IMR-90 (cell line): ENCODE measurements at regions of chr3 and their contacts with region 1.

Region 1: DNA sequence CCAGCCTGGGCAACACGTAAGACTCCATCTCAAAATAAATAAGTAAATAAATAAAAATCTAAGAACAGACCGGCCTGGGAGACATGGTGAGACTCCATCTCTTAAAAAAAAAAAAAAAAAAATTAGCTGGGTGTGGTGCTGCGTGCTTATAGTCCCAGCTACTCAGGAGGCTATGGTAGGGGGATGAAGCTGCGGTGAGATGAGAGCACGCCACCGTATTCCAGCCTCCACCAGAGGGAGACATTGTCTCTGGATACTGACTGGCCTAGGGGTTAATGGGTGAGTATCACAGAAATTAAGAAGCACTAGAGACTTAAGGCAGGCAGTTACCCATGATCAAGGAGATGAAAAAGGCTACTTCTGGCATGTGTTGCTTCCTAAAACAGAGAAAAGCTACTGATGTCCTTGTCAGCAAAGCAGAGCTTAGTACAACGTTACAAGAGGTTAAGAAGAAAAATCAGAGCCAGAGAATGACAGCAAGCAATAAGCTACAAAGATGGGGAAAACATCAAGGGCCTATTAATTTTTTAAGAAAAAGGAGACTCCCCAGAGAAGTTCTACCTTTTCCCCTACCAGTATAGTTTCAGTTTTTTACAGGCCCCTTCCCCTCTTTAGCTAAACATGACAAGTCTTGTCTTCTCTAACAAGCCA is 8.6 kb downstream of the TFRC start:
- DNase-seq: peak; percentile 54
- ATAC-seq: peak; percentile 91
- H3K4me3 ChIP-seq: no peak overlapping the region
- H3K27ac ChIP-seq: no peak overlapping the region
- H3K4me1 ChIP-seq: peaks cover 4% of the 10 kb centered on the region; the same call in 1 of the 2 replicates
- H3K27me3 ChIP-seq: no peaks in the 10 kb centered on the region
- CTCF ChIP-seq: peak; percentile 71
- POLR2A ChIP-seq: 0 out of 2 replicates have a peak, but pooled peaks have one; percentile 24
- RAD21 ChIP-seq: peak; percentile 83

Region 2: DNA sequence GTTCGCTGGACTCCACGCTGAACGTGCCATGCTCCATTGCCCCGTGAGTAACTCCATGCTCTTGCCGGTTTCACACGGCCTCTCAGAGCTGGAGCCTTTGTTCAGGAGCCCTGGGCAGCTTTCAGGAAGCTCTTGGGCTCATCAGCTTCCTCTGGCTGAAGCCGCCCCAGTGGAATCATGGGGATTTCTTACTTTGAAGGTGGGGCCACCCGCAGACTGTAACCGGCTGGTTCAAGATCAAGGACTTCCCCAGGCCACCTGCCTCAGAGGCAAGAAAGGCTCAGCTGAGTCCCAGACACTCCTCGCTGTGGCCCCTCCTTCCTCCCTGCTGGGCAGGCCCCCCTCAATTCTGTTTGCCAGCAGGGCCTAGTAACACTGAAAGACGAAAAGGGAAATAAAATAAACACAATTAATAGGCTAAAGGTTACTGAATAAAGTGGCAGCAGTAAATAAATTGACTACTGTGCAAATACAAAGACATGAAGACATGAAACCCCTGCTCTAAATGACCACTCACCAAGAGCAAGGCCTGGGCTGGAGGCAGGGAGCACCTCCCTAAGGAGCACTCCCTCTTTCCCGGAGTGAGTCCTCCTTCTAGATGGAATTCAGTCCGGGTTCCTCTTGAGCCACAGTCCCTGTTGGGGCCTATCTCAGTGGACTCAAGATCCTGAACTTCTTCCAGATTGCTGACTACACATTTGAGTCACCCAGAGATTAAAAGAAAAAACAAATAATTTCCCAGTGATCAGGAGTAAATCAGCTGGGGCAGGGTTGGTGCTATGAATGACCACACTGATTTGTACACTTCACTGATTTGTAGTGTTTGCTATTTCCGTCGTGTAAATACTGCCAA is 86.9 kb after region 1 on chr3:
- CTCF ChIA-PET with region 1: no interaction called
- POLR2A ChIA-PET with region 1: interaction called, 10 read pairs
- dilution Hi-C with region 1: no loop called
- in situ Hi-C with region 1: no loop called
- intact Hi-C with region 1: no loop called
- DNase-seq: peak; percentile 93
- ATAC-seq: peak; percentile 94
- H3K4me3 ChIP-seq: no peak overlapping the region
- H3K27ac ChIP-seq: peak overlapping the region; percentile 45
- H3K4me1 ChIP-seq: peaks cover 7% of the 10 kb centered on the region
- H3K27me3 ChIP-seq: peaks cover 5% of the 10 kb centered on the region; the same call in 1 of the 2 replicates
- CTCF ChIP-seq: no peak
- POLR2A ChIP-seq: no peak
- RAD21 ChIP-seq: no peak

Region 3: DNA sequence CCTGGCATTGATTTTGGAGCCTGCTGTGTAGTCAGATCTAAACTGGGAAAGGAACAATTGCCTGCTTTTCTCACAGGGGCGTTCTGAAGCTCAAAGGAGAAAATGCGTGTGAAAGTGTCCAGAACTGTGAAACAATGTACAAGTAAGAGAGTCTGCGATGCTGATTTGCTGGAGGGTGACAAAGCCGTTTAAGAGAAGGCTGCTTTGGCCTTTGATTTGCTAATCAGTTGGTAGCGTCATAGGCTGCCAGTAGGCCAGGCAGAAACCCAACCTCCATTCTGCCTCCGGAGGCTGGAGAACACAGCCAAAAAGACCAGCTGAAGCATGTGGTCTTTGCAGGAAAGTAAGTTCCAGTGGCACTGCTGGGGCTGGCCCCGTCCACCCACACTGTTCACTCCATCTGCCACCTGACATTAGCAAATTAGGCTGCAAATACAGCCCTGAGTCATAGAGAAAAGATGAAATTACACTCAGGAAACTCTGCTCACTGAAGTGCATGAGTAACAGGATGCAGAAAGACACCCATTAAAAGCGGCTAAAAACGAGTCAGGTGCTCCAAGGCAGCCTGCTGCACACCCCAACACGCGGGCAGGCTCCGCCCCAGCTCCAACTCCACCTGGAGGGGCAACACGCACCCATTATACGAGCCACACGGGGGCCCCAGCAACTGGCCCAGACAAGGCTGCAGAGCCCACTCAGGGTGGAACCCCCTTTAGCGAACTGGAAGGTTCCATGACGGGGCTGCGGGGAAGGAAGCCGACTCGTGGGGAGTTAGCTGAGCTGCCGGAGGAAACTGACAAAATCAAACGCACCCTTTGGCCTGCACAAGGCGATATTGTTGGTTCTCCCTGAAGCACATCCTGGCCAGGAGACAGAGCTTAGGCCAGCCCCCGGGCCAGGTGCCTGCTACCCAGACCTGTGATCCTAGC is 106.3 kb after region 1 on chr3:
- CTCF ChIA-PET with region 1: interaction called, 3 read pairs
- POLR2A ChIA-PET with region 1: no interaction called
- dilution Hi-C with region 1: loop called (anchors 25 kb)
- in situ Hi-C with region 1: no loop called
- intact Hi-C with region 1: no loop called
- DNase-seq: peak; percentile 77
- ATAC-seq: peak; percentile 83
- H3K4me3 ChIP-seq: no peak overlapping the region
- H3K27ac ChIP-seq: no peak overlapping the region
- H3K4me1 ChIP-seq: peaks cover 3% of the 10 kb centered on the region; the same call in 1 of the 2 replicates
- H3K27me3 ChIP-seq: peaks cover 4% of the 10 kb centered on the region; the same call in 1 of the 2 replicates
- CTCF ChIP-seq: no peak
- POLR2A ChIP-seq: no peak
- RAD21 ChIP-seq: no peak

Region 4: GRCh38 chr3:196186651-196187573 is 113.6 kb after region 1 on chr3:
- CTCF ChIA-PET with region 1: interaction called, 17 read pairs
- POLR2A ChIA-PET with region 1: no interaction called
- dilution Hi-C with region 1: loop called (anchors 25 kb)
- in situ Hi-C with region 1: no loop called
- intact Hi-C with region 1: no loop called
- DNase-seq: peak; percentile 22
- ATAC-seq: peak; percentile 21; the same call in 1 of the 2 replicates
- H3K4me3 ChIP-seq: no peak overlapping the region
- H3K27ac ChIP-seq: no peak overlapping the region
- H3K4me1 ChIP-seq: no peaks in the 10 kb centered on the region; the same call in 1 of the 2 replicates
- H3K27me3 ChIP-seq: 0 out of 2 replicates have a peak, but pooled peaks cover 2% of the 10 kb centered on the region
- CTCF ChIP-seq: no peak
- POLR2A ChIP-seq: no peak
- RAD21 ChIP-seq: no peak

Region 5: DNA sequence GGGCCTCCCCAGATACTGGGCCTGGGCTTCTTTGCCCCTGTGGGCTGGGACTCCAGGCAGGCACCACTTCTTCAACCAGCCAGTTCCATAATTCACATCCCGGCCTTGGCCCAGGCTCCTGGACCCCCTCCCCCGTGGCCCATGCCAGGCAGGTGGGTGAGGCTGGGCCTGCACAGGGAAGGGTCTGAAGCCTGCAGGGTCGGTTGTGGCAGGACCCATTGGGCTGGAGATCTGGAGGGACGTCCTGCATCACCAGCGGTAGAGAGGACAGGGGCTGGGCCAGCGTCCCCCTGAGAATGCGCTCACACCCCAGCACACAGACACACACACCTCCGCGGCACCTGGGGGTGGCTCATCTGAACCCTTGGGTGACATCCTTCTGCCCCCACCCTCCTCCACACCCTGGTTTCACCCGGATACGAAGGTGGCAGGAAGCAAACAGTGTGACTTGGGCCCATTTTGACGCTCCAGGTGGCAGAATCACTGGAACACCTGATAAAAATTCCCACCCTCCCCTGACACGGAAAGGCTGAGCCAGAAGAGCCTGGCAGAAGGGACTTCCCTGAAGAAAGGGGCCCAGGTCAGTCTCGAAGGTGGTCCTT is 122.5 kb after region 1 on chr3:
- CTCF ChIA-PET with region 1: interaction called, 10 read pairs
- POLR2A ChIA-PET with region 1: interaction called, 3 read pairs
- dilution Hi-C with region 1: loop called (anchors 25 kb)
- in situ Hi-C with region 1: loop called (anchors 5 kb)
- intact Hi-C with region 1: loop called (anchors 1 kb)
- DNase-seq: no peak
- ATAC-seq: no peak
- H3K4me3 ChIP-seq: no peak overlapping the region
- H3K27ac ChIP-seq: no peak overlapping the region
- H3K4me1 ChIP-seq: no peaks in the 10 kb centered on the region
- H3K27me3 ChIP-seq: no peaks in the 10 kb centered on the region
- CTCF ChIP-seq: no peak
- POLR2A ChIP-seq: no peak
- RAD21 ChIP-seq: no peak

Region 6: DNA sequence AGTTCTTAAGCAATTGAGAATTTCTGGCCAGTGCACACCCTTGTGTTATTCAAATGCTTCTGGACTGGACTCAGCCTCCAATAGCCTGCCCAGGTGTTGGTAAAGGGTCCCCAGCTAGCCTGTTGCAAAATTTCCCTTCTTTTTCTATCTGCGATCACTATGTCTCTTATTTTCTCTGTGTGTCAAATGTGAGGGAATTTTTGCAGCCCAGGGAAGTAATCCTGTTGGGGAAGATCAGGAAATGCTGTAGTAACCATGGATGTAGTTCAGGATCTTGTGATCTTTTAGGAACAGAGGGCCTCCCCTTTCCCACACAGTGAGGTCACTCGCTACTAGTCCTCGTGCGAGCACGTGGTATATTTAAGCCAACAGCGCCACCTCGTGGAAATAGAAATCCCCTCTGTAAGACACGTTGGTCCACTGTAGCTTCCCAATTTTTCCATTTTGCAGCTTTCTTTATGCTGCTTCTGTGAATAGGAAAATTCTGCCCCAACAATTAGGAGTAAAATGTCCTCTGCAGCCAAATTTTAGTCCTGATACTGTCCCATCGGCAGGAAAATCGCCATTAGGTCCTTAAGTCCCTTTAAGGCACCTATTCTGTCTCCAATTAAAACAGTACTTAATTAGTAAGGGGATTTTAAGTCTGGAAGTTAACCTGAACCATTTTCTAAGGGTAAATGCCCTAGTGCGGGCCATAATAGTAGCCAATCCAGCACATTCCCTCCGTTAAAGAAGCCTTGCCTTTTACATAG is 445.8 kb after region 1 on chr3:
- CTCF ChIA-PET with region 1: no interaction called
- POLR2A ChIA-PET with region 1: no interaction called
- dilution Hi-C with region 1: no loop called
- in situ Hi-C with region 1: loop called (anchors 10 kb)
- intact Hi-C with region 1: no loop called
- DNase-seq: peak; percentile 73
- ATAC-seq: peak; percentile 83
- H3K4me3 ChIP-seq: no peak overlapping the region
- H3K27ac ChIP-seq: no peak overlapping the region
- H3K4me1 ChIP-seq: no peaks in the 10 kb centered on the region
- H3K27me3 ChIP-seq: no peaks in the 10 kb centered on the region
- CTCF ChIP-seq: peak; percentile 74
- POLR2A ChIP-seq: no peak
- RAD21 ChIP-seq: peak; percentile 86